Motor neuron (in vitro differentiated cells): ENCODE measurements at regions of chr13 and their contacts with region 1.

Region 1: DNA sequence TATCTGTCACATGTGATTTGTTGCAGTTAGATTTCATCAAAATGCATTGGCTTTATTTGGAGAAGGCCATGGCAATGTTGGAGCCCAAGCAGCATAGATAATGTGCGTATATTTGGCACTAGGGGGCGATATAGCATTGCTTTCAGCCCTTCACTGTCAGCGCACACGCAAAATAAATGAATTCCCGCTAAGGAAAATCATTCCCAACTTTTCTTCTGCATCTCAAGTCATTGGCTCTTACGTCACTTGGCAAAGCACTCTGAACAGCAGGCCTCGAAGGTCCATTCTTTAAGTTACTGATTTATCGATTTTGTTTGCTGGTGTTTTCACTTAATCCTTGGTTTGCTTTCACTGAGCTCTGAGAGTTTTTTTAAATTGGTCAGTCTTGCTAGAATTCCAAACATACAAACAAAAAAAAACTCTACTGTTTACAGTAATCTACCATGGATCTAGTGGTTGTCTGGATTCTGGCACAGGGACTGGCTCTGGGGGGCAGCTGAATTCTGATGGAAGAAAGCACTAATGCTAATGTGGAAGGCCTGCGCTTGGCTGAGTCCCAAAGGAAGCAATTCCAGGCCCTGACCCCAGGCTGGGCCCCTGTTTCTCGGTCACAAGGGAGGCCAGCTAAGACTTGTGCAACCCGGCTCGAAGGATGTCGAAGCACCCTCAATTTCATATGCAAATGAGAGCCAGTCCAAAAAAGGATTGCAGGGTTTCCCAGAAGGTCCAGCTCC is 97.7 kb upstream of the IPO5 start:
- ATAC-seq: peak; percentile 91 to 96 (median 95)
- H3K4me3 ChIP-seq: no peak overlapping the region
- H3K27ac ChIP-seq: peak overlapping the region in 1 of 2 donors; percentile 42
- H3K4me1 ChIP-seq: peaks cover 9 to 11% of the 10 kb centered on the region in 2 donors

Region 2: DNA sequence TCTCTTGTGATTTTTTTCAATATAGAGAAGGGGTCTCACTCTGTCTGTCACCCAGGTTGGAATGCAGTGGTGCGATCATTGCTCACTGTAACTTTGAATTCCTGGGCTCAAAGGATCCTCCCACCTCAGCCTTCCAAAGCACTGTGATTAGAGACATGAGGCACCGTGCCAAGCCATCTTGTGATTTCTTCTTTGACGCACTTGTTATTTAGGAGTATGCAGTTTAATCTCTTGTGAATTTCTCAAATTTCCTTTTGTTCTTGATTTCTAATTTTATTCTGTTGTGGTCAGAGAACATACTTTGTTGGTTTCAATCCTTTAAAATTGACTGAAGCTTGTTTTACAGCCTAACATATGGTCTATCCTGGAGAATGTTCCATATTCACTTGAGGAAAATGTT is 112.2 kb after region 1 on chr13:
- in situ Hi-C with region 1: loop called in 1 of 9 experiments (anchors 25 kb)
- ATAC-seq: peak in 1 of 8 experiments; percentile 35
- H3K4me3 ChIP-seq: no peak overlapping the region
- H3K27ac ChIP-seq: no peak overlapping the region
- H3K4me1 ChIP-seq: no peaks in the 10 kb centered on the region

Region 3: DNA sequence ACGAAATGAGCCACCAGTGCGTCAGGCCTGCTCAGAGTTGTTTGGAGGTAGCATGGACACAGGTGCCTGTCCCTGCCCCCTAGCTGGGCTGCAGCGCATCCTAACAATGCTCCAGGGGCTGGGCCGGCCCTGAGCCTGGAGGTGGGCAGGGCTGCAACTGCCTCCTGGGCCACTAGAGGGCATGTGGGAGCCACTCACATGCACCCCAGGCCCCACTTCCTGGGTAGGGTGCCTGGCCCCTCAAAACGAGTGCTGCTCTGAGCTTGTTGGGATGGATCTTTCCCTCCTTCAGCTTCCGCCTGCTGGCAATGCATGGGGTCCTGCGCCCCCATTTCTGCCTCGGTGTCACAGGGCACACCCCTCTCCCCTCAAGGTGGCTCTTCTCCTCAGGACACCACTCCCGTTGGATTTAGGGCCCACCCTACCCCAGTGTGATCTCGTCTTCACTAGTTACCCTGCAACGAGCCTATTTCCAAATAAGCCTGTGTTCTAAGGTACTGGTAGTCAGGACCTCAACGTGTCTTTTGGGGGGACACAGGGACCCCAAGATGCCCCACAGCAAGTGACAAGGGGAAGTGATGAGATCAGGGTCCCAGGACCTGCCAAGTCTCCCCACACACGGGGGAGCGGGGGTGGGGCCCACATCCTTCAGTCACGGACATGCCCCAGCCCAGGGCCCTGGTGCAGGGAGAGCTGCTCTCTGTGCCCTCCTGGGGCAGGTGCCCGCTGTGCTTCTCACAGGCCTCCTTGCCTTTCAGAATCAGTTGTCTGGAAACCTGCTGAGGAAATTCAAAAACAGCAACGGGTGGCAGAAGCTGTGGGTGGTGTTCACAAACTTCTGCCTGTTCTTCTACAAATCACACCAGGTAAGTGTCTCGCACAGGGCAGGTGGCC is 589.9 kb after region 1 on chr13:
- in situ Hi-C with region 1: loop called in 1 of 9 experiments (anchors 25 kb)
- ATAC-seq: peak; percentile 72 to 94 (median 88)
- H3K4me3 ChIP-seq: no peak overlapping the region
- H3K27ac ChIP-seq: no peak overlapping the region
- H3K4me1 ChIP-seq: peaks cover 10 to 13% of the 10 kb centered on the region in 2 donors